Heart left ventricle (tissue), 16 donors: ENCODE measurements at regions of chr5 and their contacts with region 1.

Region 1: GRCh38 chr5:34915139-34915855 is at the starts of genes BRIX1 and RAD1:
- DNase-seq: peak; percentile 96 to 98 (median 98)
- ATAC-seq: peak; percentile 100
- H3K4me3 ChIP-seq: peak within 1 kb of the TSS; percentile 57 to 97 (median 84)
- H3K27ac ChIP-seq: peak within 1 kb of the TSS; percentile 61 to 92 (median 88)
- H3K4me1 ChIP-seq: peaks cover 7 to 36% (median 24%) of the 10 kb centered on the region in 12 donors
- H3K27me3 ChIP-seq: no peaks in the 10 kb centered on the region
- CTCF ChIP-seq: peak in 6 of 12 donors; percentile 16 to 48 (median 32)
- POLR2A ChIP-seq: peak in 1 of 2 donors; percentile 37
- total RNA-seq, gene BRIX1: 10.5 to 19.6 (median 14.5) TPM
- total RNA-seq, gene RAD1: 12.8 to 29.6 (median 22.7) TPM

Region 2: DNA sequence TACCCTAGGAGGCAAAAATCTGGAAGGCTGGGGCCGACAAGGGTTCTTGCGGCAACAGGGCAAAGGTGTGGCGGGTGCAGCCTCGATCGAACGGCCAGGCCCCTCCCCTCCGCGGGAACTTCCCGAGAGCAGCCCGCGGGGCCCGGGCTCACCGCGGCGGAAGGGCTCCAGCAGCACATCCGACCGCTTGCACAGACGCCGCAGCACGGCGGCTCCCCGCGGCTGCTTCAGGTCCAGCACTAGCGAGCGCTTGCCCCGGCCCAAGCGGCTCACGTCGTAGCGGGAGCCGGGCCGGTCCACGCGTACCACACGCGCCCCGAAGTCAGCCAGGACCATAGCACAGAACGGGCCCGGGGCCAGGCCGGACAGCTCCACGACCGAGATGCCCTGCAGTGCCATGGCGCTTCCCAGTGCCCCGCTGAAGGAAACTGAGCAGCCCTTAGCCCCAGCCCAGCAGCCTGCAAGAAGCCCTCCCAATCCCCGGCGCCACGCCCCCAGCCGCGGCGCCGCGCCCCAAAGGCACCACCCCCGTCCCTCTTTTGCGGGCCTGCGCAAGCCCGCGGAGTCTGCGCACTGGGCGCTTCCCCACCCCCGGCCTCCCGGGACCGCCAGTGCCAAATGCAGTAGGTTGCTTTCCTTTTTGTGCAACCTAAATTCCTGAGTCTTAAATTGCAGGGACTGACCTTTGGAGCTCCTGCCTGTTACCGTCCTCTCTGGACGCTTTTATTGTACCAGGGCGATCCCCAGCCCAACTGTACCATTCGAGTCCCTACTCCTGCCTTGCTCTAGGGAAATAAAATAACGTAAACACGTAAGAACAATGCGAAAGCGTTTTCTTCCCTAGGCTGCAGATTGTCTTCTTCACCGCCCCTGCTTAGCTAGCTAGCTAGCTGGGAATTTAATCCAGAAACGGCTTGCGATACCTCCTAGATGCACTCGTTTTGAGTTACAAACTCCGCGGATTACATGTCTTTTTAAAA is 907.4 kb before region 1 on chr5 and contains the start of gene AMACR:
- intact Hi-C with region 1: loop called in 2 of 10 experiments (anchors 5 to 10 kb)
- DNase-seq: peak; percentile 93 to 97 (median 94)
- ATAC-seq: peak; percentile 93 to 99 (median 98)
- H3K4me3 ChIP-seq: peak within 1 kb of the TSS; percentile 62 to 93 (median 72)
- H3K27ac ChIP-seq: peak within 1 kb of the TSS; percentile 71 to 98 (median 94)
- H3K4me1 ChIP-seq: peaks cover 0 to 24% (median 14%) of the 10 kb centered on the region in 12 donors
- H3K27me3 ChIP-seq: no peaks in the 10 kb centered on the region
- CTCF ChIP-seq: peak in 2 of 12 donors; percentile 28 to 33
- POLR2A ChIP-seq: peak in 1 of 2 donors; percentile 95
- total RNA-seq, gene AMACR: 2.6 to 17.5 (median 8.4) TPM

Region 3: GRCh38 chr5:34929150-34929719 is 13.9 kb after region 1 on chr5 and contains the start of gene DNAJC21:
- intact Hi-C with region 1: loop called in 2 of 10 experiments (anchors 1 to 2 kb)
- DNase-seq: peak; percentile 98 to 99 (median 99)
- ATAC-seq: peak; percentile 96 to 99 (median 98)
- H3K4me3 ChIP-seq: peak within 1 kb of the TSS; percentile 56 to 95 (median 86)
- H3K27ac ChIP-seq: peak within 1 kb of the TSS; percentile 61 to 97 (median 92)
- H3K4me1 ChIP-seq: peaks cover 0 to 26% (median 18%) of the 10 kb centered on the region in 12 donors
- H3K27me3 ChIP-seq: no peaks in the 10 kb centered on the region
- CTCF ChIP-seq: no peak
- POLR2A ChIP-seq: peak in 1 of 2 donors; percentile 45
- total RNA-seq, gene DNAJC21: 35.7 to 60.1 (median 51.1) TPM